CD8-positive, alpha-beta T cell (primary cell): ENCODE measurements at regions of chrX and their contacts with region 1.

Region 1: GRCh38 chrX:136674270-136674985 is 26.5 kb downstream of the CD40LG start:
- DNase-seq: peak in 4 of 9 experiments; percentile 12 to 73 (median 44)
- ATAC-seq: peak; percentile 86
- H3K4me3 ChIP-seq: peak overlapping the region in 1 of 2 experiments; percentile 8
- H3K4me3 Mint-ChIP-seq: peak overlapping the region; percentile 70
- H3K27ac ChIP-seq: peak overlapping the region; percentile 24 to 27
- H3K27ac Mint-ChIP-seq: peak overlapping the region; percentile 95
- H3K4me1 ChIP-seq: peaks cover 63% of the 10 kb centered on the region
- H3K4me1 Mint-ChIP-seq: peaks cover 70% of the 10 kb centered on the region
- H3K27me3 ChIP-seq: no peaks in the 10 kb centered on the region
- H3K27me3 Mint-ChIP-seq: no peaks in the 10 kb centered on the region
- CTCF ChIP-seq: no peak

Region 2: GRCh38 chrX:136376713-136377112 is 297.7 kb before region 1 on chrX:
- CTCF ChIA-PET with region 1: no interaction called
- POLR2A ChIA-PET with region 1: no interaction called
- intact Hi-C with region 1: no loop called
- DNase-seq: no peak
- ATAC-seq: no peak
- H3K4me3 ChIP-seq: no peak overlapping the region
- H3K4me3 Mint-ChIP-seq: no peak overlapping the region
- H3K27ac ChIP-seq: no peak overlapping the region
- H3K27ac Mint-ChIP-seq: no peak overlapping the region
- H3K4me1 ChIP-seq: no peaks in the 10 kb centered on the region
- H3K4me1 Mint-ChIP-seq: no peaks in the 10 kb centered on the region
- H3K27me3 ChIP-seq: no peaks in the 10 kb centered on the region
- H3K27me3 Mint-ChIP-seq: peaks cover 4% of the 10 kb centered on the region
- CTCF ChIP-seq: no peak

Region 3: DNA sequence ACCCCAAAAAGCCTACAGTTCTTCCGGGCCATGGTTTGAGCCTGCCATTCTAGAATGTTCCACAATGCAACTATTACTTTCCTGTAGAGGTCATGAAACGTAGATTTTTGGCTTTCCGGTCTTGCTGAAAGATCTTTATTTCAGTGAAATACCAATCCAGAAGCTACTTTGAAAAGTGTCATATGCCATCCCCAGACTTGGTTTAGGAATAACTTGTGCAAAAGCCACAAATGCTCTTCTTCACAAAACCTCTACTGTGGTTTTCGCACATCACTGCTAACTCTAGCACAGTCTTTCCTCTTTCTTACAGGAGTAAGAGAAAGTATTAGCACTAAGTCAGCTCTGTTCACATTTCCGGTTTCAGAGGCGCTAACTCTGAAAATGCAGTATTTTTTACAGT is 39.2 kb before region 1 on chrX:
- CTCF ChIA-PET with region 1: no interaction called
- POLR2A ChIA-PET with region 1: interaction called, 7 read pairs
- intact Hi-C with region 1: loop called in 1 of 2 experiments (anchors 5 kb)
- DNase-seq: peak in 3 of 9 experiments; percentile 11 to 81 (median 58)
- ATAC-seq: peak; percentile 82
- H3K4me3 ChIP-seq: peak overlapping the region in 1 of 2 experiments; percentile 21
- H3K4me3 Mint-ChIP-seq: peak overlapping the region; percentile 68
- H3K27ac ChIP-seq: peak overlapping the region; percentile 35 to 49
- H3K27ac Mint-ChIP-seq: peak overlapping the region; percentile 85
- H3K4me1 ChIP-seq: peaks cover 88% of the 10 kb centered on the region
- H3K4me1 Mint-ChIP-seq: peaks cover 80% of the 10 kb centered on the region
- H3K27me3 ChIP-seq: no peaks in the 10 kb centered on the region
- H3K27me3 Mint-ChIP-seq: no peaks in the 10 kb centered on the region
- CTCF ChIP-seq: no peak

Region 4: GRCh38 chrX:136708348-136708747 is 33.9 kb after region 1 on chrX:
- CTCF ChIA-PET with region 1: no interaction called
- POLR2A ChIA-PET with region 1: no interaction called
- intact Hi-C with region 1: no loop called
- DNase-seq: peak in 2 of 9 experiments; percentile 21 to 37
- ATAC-seq: peak; percentile 54
- H3K4me3 ChIP-seq: no peak overlapping the region
- H3K4me3 Mint-ChIP-seq: no peak overlapping the region
- H3K27ac ChIP-seq: no peak overlapping the region
- H3K27ac Mint-ChIP-seq: peak overlapping the region; percentile 62
- H3K4me1 ChIP-seq: peaks cover 12% of the 10 kb centered on the region
- H3K4me1 Mint-ChIP-seq: peaks cover 20% of the 10 kb centered on the region
- H3K27me3 ChIP-seq: no peaks in the 10 kb centered on the region
- H3K27me3 Mint-ChIP-seq: no peaks in the 10 kb centered on the region
- CTCF ChIP-seq: peak; percentile 49

Region 5: DNA sequence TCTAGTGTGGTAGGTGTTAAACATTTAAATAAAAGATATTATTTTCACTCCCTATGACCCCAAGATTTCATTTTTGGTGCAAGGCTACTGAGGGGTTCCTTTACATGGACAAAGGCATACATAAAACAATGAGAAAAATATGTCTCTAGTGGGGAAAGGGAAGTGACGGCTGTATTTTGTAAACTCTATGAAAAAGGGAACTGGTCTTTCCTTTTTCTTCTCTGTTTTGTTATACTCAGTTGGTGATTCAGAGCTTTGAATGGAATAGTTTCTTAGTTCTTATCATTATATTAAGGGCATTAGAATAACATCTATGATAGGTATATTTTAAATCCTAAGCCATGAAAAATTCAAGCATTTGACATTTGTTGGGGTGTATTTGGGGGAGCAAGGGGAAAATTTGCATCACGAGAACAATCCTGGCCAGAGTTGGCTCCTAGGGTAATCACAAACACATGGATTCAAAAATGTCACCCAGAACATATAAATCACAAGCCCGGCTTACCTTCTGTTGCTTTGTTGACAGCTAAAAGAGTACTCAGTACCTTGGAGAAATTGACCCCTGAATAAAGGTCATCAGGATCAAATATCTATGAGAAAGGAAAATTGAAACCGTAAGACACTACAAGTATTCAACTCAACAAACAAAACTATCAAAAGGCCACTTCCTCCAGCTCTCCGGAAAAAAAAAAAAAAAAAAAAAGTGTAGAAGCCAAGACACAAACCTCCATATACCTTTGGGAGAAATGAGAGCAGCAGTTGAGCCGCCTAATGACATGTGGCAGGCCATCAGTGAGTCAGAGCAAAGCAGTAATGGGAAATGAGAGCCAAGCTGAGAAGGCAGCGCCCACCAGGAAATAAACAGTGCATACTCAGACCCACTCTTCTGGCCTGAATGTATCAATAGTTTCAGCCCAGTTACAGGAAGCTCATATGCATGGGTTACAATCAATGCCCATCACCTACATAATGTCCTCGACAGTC is 72.9 kb after region 1 on chrX:
- CTCF ChIA-PET with region 1: no interaction called
- POLR2A ChIA-PET with region 1: no interaction called
- intact Hi-C with region 1: no loop called
- DNase-seq: peak in 1 of 9 experiments; percentile 6
- ATAC-seq: peak; percentile 61
- H3K4me3 ChIP-seq: no peak overlapping the region
- H3K4me3 Mint-ChIP-seq: peak overlapping the region; percentile 60
- H3K27ac ChIP-seq: no peak overlapping the region
- H3K27ac Mint-ChIP-seq: peak overlapping the region; percentile 83
- H3K4me1 ChIP-seq: peaks cover 32% of the 10 kb centered on the region
- H3K4me1 Mint-ChIP-seq: peaks cover 81% of the 10 kb centered on the region
- H3K27me3 ChIP-seq: no peaks in the 10 kb centered on the region
- H3K27me3 Mint-ChIP-seq: no peaks in the 10 kb centered on the region
- CTCF ChIP-seq: no peak